Activated naive CD4-positive, alpha-beta T cell treated with anti-CD3 and anti-CD28 coated beads for 36 hours (primary cell): ENCODE measurements at regions of chr19 and their contacts with region 1.

Region 1: DNA sequence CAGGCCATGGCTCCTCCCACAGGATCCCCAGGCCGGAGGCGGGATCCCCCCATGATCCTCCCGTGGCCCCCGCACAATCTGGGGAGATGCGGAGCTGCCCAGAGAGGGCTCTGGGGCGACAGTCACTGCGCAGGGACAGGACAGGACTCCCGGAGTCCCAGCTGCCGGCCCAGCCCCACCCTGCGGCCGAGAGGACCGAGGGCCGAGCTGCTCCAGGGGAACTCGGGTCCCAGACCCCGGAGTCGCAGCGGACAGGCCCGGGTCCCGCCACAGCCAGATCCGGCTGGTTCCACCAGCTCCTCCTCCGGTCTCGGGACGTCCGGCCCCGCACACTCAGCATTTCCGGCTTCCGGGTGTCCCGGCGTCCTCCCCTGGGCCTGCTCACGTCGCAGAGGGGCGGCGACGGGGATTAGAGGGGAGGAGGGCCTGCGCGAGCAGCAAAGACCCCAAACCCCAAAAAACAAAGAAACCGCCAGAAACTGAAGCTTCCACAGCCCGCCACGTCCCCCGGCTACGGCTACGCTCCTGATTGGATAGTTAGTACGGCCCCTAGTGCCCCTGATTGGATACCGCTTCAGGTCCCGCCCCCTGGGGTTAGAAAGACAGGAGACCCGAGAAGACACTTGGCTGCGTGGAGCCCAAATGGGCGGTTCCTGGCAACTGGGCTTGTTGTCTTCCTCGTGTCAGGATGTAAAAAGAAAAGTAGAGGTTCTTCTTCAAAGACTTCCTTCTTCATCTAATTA is 21.3 kb upstream of the OR10H1 start:
- DNase-seq: peak; percentile 98
- H3K4me3 Mint-ChIP-seq: peak overlapping the region; percentile 88
- H3K27ac Mint-ChIP-seq: peak overlapping the region; percentile 96
- H3K4me1 Mint-ChIP-seq: peaks cover 13% of the 10 kb centered on the region
- H3K27me3 Mint-ChIP-seq: no peaks in the 10 kb centered on the region

Region 2: DNA sequence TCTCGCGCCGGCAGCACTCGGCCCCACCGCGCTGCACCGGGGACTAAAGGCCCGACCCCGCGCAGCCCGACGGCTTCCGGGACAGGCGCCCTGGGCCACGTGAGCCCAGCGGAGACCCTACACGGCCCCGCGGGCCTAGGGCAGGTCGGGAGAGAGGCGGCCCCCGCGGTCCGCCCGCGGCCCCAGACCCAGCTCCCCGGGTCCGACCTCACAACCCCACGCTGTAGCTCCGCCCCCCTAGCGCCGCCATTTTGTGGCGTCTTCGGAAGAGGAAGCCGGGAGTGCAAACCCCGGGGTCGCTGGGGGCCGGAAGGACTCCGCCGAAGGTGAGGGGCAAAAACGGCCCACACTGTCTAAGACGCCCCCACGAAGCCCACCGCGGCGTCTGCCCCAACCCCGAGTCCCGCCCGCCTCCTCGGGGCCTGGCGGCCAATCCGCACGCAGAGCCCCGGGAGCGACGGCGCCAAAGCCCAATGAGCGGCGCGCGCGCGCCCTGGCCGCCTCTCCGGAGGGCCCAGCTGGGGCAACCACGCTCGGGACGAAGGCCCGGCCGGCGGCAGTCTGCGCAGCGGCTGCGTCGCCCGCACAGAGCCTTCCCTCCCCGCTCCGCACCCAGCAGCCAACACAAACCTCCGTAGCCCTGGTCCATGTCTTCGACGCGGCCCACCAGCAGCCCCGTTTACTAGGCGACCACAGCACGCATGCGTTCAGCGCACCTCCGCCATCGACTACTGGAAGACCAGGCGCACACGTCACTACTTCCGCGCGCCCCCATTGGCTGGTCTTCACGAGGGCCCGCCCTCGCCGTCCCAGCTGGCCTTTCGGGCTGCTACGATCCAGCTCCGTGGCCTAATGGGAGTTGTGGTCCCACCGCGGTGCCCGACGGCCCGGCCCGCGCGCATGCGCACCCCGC is 457.4 kb before region 1 on chr19 and contains the start of gene AKAP8:
- CTCF ChIA-PET with region 1: no interaction called
- intact Hi-C with region 1: loop called (anchors 1 kb)
- DNase-seq: peak; percentile 98
- H3K4me3 Mint-ChIP-seq: peak within 1 kb of the TSS; percentile 93
- H3K27ac Mint-ChIP-seq: peak within 1 kb of the TSS; percentile 96
- H3K4me1 Mint-ChIP-seq: peaks cover 48% of the 10 kb centered on the region
- H3K27me3 Mint-ChIP-seq: no peaks in the 10 kb centered on the region
- total RNA-seq, gene AKAP8: 27.1 to 30.3 TPM

Region 3: GRCh38 chr19:16062789-16063188 is 226.0 kb after region 1 on chr19:
- CTCF ChIA-PET with region 1: no interaction called
- intact Hi-C with region 1: loop called (anchors 1 kb)
- DNase-seq: peak; percentile 84
- H3K4me3 Mint-ChIP-seq: no peak overlapping the region
- H3K27ac Mint-ChIP-seq: no peak overlapping the region
- H3K4me1 Mint-ChIP-seq: peaks cover 20% of the 10 kb centered on the region
- H3K27me3 Mint-ChIP-seq: no peaks in the 10 kb centered on the region

Region 4: GRCh38 chr19:16111160-16111908 is 274.6 kb after region 1 on chr19 and contains the start of gene RAB8A:
- CTCF ChIA-PET with region 1: no interaction called
- intact Hi-C with region 1: loop called (anchors 2 kb)
- DNase-seq: peak; percentile 99
- H3K4me3 Mint-ChIP-seq: peak within 1 kb of the TSS; percentile 98
- H3K27ac Mint-ChIP-seq: peak within 1 kb of the TSS; percentile 96
- H3K4me1 Mint-ChIP-seq: peaks cover 36% of the 10 kb centered on the region
- H3K27me3 Mint-ChIP-seq: no peaks in the 10 kb centered on the region
- total RNA-seq, gene RAB8A: 90.5 to 95.2 TPM

Region 5: DNA sequence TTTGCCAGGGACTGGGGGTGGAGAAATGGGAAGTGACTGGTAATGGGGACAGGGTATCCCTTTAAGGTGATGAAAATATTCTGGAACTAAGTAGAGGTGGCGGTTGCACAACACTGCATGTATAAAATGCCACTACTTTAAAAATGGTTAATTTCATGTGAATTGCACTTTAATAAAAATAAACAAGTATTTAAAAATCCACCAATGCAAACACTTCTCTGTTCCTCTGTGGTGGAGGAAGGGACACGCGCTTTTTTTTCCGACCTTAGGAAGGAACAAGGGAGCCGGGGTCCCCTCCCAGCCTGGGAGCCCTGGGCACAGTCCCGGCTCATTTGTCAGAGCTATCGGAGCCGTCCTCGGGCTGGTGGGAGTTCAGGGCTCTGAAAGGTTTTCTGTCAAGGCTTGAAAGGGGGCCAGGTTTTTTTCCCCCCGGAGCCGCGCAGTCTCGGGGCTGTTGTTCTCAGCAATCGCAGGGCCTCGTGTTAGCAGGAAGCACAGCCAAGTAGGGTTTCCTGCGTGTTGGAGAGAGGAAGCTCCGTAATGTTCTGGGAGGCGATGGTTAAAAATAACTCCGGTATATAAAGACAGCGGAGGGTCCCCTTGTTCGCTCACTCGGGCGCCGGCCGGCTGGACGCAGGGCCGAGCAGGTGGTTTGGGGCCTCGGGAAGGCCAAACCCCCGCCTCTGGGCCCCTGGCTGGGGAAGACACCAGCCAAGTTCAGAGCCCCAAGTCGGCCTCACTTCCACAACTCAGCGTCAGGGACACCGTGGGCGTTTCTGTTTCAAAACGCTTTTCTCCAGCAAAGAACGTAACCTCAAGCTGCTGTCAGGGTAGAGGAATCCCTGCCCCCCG is 446.7 kb after region 1 on chr19:
- CTCF ChIA-PET with region 1: no interaction called
- intact Hi-C with region 1: loop called (anchors 2 kb)
- DNase-seq: peak; percentile 92
- H3K4me3 Mint-ChIP-seq: peak overlapping the region; percentile 52
- H3K27ac Mint-ChIP-seq: peak overlapping the region; percentile 66
- H3K4me1 Mint-ChIP-seq: peaks cover 43% of the 10 kb centered on the region
- H3K27me3 Mint-ChIP-seq: peaks cover 7% of the 10 kb centered on the region

Region 6: DNA sequence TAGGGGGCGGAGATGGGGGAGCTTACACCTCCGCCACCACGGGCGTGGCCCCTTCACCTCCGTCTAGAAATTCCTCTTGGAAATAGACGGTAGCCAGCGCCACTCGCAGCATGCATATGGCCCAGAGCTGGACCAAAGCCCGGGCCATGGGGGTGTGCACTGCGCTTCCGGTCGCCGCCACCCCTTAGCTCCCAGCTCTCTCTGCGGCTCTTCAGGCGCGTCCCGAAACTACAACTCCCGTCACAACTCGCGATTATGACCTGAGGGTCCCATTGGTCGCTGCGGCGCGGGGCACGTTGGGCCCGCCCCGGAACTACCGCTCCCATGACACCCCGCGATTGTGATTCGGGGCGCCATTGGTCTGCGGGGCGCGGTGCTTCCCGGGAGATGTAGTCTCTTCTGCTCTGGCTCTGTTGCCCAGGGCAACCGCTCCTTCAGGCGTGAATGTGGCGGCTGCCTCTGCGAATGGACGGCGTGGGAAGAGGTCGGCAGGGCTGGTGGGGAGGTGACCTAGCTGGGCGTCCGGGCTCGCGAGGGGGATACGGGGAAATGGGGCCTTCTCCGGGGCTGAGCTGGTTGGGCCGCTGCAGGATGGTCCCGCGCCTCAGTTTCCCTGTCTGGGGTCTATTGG is 659.3 kb after region 1 on chr19 and contains the starts of genes C19orf44 and CALR3:
- CTCF ChIA-PET with region 1: no interaction called
- intact Hi-C with region 1: loop called (anchors 5 kb)
- DNase-seq: peak; percentile 98
- H3K4me3 Mint-ChIP-seq: peak within 1 kb of the TSS; percentile 95
- H3K27ac Mint-ChIP-seq: peak within 1 kb of the TSS; percentile 64
- H3K4me1 Mint-ChIP-seq: peaks cover 15% of the 10 kb centered on the region
- H3K27me3 Mint-ChIP-seq: no peaks in the 10 kb centered on the region
- total RNA-seq, gene C19orf44: 2.1 to 2.6 TPM
- total RNA-seq, gene CALR3: not detected